Cardiac septum (tissue), 1 donor: ENCODE measurements at regions of chr4 and their contacts with region 1.

Region 1: GRCh38 chr4:113761620-113762185 is at the start of gene CAMK2D:
- DNase-seq: peak; percentile 92
- total RNA-seq, gene CAMK2D: 217 TPM

Region 2: DNA sequence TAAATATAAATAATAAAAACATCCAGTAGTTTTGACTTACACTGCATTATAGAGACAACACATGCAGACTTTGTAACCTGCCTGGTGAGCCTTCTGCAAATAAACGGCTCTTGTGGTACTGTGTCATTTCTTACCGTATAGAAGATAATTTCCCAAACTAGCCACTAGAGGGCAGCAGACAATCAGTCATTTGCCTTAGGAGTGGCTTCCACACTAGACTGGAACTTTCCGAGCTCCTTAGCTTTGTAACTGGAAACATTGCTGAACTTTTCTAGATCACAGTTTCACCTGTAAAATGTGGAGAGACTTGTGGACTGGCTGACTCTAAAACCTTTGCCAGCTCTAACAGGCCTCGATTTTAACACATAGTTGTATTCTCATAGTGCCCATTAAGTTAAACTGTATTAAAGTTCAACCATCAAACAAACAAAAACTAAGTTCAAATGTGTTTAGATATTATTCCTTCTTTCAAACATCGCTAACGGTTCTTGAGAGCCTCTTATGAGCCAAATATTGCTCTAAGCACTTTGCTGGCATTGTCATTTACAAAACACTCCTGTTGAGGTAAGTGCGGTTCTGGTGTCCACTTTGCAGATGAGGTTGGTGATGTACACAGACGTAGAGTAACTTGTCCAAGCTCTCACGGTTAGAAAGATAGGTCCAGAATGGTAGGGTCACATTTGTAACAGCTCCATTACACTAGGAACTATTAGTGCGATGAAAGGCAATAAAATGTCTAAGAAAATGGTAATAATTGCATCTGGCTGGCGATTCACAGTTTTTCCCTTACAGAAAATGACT is 366.8 kb before region 1 on chr4:
- intact Hi-C with region 1: loop called (anchors 2 kb)
- DNase-seq: no peak

Region 3: DNA sequence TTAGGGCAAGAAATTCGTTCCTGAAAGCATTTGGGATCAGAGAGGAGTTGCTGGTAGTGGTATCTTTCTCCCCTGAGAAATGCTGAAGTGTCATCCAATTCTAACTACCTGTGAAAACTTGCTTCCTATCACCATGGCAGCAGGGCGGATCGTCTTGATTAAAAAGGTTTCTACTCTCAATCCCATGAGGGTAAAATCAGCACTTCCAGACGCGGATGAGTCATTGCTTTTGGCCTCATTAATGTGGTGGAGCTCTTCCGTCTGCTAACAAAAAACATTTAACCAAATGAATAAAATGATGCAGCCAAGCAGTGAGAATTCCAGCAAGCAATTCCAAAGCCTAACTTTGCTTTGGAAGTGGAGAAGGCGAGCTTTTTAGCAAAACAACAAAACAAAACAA is 325.8 kb before region 1 on chr4:
- intact Hi-C with region 1: no loop called
- DNase-seq: no peak

Region 4: DNA sequence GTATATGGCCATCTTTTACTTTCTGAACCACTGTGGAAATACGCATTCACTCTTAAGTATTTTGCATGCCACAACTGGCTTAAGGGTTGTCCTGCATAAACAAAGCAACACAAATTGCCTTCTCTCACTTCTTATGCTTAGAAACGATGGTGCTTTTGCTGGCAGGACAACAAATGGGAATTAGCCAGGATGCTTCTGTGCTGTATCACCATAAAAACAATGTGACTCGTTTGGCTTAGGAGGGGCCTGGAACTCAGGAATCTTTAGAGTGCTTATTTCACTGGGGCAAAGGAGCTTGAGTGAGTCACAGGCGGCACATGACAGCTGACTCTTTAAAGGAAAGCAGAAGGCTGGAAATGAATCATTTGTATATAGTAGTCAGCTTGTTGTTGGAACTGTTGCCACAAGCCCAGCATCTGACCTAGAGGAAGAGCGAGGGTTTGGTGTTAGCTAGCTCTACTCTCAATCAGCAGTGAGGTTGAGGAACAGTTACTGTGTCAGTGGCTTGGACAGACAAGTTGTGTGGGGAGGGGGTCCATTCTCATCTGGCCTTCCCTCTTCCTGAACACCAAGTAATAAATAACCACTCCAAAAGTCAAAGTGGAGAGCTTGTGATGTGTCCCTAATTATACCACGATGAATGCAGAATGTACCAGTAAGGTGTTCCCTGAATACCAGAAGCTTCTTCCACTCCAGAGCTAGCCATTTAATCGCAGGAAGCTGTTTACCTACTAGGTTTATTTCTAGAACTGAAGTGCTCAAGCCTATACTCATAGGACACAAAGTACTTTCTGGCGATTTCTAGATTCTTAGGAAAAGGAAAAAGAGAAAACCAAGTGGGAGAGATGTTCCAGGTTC is 293.3 kb before region 1 on chr4:
- intact Hi-C with region 1: loop called (anchors 1 kb)
- DNase-seq: peak; percentile 88

Region 5: GRCh38 chr4:113584407-113585150 is 177.1 kb before region 1 on chr4:
- intact Hi-C with region 1: loop called (anchors 2 kb)
- DNase-seq: no peak

Region 6: DNA sequence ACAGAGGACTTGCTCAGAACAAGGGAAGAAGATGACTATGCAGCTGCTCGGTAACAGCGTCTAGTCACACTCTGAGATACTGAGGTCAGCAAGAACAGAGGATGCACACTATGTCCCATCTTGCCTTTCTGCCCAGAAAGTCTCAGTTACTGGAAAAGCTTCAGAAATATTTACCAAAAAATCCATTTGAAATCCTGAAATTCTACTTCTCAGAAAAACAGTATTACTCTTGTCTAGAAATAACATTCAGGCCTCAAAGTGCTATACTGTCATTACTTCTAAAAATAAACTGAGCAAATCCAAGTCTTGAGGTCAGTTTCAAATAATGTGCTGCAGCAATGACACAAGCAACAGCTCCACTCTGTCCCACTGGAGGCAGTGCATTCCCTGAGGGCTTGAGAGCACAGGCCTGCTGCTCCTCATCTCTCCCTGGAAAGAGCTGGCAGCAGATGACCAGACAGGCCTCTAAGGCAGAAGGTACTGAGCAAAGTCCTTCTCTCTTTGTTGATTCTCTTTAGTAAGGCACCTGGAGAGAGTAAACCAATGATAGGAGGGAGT is 77.1 kb before region 1 on chr4:
- intact Hi-C with region 1: loop called (anchors 2 kb)
- DNase-seq: peak; percentile 81